ENCODE measurements at regions of chr4 and their contacts with region 1.

Region 1: GRCh38 chr4:10164877-10165283 is 48.3 kb upstream of the WDR1 start:
- DNase-seq: no peak
- H3K4me3 ChIP-seq: no peak overlapping the region
- H3K27ac ChIP-seq: no peak overlapping the region
- H3K27me3 ChIP-seq: no peaks in the 10 kb centered on the region
- CTCF ChIP-seq: peak; percentile 67

Region 2: GRCh38 chr4:10403633-10404445 is 239.0 kb after region 1 on chr4:
- CTCF ChIA-PET with region 1: interaction called, 63 read pairs
- POLR2A ChIA-PET with region 1: no interaction called
- DNase-seq: no peak
- H3K4me3 ChIP-seq: no peak overlapping the region
- H3K27ac ChIP-seq: no peak overlapping the region
- H3K27me3 ChIP-seq: peaks cover 2% of the 10 kb centered on the region
- CTCF ChIP-seq: peak; percentile 41

Region 3: DNA sequence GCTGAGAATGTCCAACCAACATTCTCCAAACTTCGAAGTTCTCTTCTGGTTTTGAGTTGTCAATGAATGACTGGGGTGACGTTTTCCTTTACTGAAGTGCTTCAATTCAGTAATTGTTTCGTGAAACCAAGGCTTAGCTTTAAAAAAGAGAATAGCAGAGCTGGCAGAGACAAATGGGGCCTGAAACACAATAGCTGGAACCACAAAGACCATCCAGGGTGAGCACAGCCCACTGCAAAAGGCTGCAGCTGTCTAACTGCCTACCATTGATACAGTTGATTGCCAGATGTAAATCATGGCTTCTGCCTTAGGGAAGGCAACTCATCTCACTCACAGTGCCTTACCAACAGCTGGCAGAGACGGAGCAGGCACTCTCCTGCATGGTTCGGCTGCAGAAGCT is 371.0 kb after region 1 on chr4:
- CTCF ChIA-PET with region 1: interaction called, 23 read pairs
- POLR2A ChIA-PET with region 1: no interaction called
- DNase-seq: no peak
- H3K4me3 ChIP-seq: no peak overlapping the region
- H3K27ac ChIP-seq: no peak overlapping the region
- H3K27me3 ChIP-seq: no peaks in the 10 kb centered on the region
- CTCF ChIP-seq: no peak

Measured in AG04450 (cell line).